AG04449 (cell line): ENCODE measurements at regions of chr3 and their contacts with region 1.

Region 1: DNA sequence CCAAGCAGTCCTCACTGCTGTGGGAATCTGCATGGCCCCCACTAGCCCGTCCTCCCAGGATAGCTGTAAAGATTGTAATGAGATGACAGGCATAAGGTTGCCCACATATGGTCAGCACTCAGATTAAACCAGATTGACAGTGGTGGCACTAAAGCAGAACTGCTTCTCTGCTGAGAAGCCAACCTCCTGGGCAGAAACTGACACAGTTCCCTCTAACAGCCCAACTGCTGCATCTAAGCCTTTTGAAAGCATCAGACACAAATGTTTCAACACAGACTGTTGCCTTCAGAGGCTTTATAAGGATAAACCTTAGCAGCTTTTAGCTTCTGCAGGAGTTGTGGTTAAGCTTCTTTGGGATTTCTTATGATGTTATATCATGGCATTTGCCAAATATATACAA is 13.0 kb downstream of the DCLK3 start:
- DNase-seq: no peak
- H3K4me3 ChIP-seq: no peak overlapping the region
- CTCF ChIP-seq: no peak

Region 2: DNA sequence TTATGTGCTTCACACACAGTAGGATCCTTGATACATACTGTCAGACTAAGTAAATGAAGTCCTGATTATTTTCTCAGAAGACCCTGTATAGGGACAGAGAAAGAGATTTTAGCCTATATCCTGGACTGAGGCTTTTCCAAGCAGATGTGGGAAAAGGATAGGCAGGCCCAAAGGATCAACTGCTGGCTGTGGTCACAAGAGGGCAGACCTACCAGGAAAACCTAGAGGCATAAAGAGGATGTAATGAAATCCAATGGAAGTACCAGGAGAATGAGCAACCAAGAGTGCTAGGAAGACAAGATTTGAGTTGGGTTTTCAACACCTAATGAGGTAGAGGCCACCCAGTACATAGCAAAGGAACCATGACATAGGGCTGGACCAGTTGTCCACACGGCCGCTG is 10.0 kb before region 1 on chr3:
- CTCF ChIA-PET with region 1: interaction called, 14 read pairs
- POLR2A ChIA-PET with region 1: no interaction called
- DNase-seq: no peak
- H3K4me3 ChIP-seq: no peak overlapping the region
- CTCF ChIP-seq: peak; percentile 18

Region 3: DNA sequence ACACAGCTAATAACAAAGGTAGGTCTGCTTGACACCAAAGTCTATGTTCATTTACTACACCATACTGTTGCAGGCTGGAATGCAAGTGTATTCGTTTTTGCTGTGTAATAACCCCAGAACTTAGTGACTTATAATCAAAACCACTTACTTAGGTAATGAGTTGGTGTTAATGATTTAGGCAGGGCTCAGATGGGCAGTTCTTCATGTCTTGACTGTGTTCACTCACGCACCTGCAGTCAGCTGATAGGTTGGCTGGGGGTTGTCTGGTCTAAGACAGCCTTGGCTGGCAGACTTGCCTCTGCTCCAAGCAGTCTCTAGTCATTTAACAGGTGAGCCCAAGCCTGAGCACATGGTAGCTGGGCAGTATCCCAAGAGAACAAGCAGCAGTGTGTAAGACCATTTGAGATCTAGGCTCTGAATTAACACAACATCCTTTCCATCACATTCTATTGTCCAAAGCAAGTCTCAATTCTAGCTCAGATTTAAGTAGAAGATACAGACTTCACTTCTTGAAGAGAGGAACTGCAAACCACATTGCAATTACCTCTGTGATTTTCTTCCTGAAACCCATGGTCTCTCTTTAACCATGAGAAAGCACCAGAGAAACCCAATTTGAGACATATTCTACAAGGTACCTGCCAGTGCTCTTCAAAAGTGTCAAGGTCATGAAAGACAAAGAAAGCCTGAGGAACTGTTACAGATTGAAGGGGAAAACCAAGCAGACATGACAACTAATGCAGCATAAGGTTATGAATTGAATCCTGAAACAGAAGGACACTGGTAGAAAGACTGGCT is 26.3 kb after region 1 on chr3:
- CTCF ChIA-PET with region 1: no interaction called
- POLR2A ChIA-PET with region 1: no interaction called
- DNase-seq: no peak
- H3K4me3 ChIP-seq: no peak overlapping the region
- CTCF ChIP-seq: no peak